ENCODE measurements at regions of chr5 and their contacts with region 1.

Region 1: GRCh38 chr5:135426102-135427082 is 20.8 kb downstream of the DCANP1 start:
- DNase-seq: peak; percentile 61
- ATAC-seq: peak; percentile 93
- H3K4me3 ChIP-seq: no peak overlapping the region
- H3K27ac ChIP-seq: no peak overlapping the region
- H3K4me1 ChIP-seq: no peaks in the 10 kb centered on the region
- H3K27me3 ChIP-seq: no peaks in the 10 kb centered on the region
- CTCF ChIP-seq: peak; percentile 71
- POLR2A ChIP-seq: no peak
- RAD21 ChIP-seq: peak; percentile 74

Region 2: GRCh38 chr5:133483406-133484090 is 1942.8 kb before region 1 on chr5:
- CTCF ChIA-PET with region 1: no interaction called
- POLR2A ChIA-PET with region 1: no interaction called
- dilution Hi-C with region 1: no loop called
- in situ Hi-C with region 1: no loop called
- intact Hi-C with region 1: no loop called
- DNase-seq: no peak
- ATAC-seq: no peak
- H3K4me3 ChIP-seq: no peak overlapping the region
- H3K27ac ChIP-seq: no peak overlapping the region
- H3K4me1 ChIP-seq: no peaks in the 10 kb centered on the region
- H3K27me3 ChIP-seq: peaks cover 13% of the 10 kb centered on the region
- CTCF ChIP-seq: no peak
- POLR2A ChIP-seq: no peak
- RAD21 ChIP-seq: no peak

Region 3: GRCh38 chr5:135345956-135346731 is 80.2 kb before region 1 on chr5:
- CTCF ChIA-PET with region 1: interaction called, 3 read pairs
- POLR2A ChIA-PET with region 1: no interaction called
- dilution Hi-C with region 1: no loop called
- in situ Hi-C with region 1: no loop called
- intact Hi-C with region 1: loop called (anchors 2 kb)
- DNase-seq: no peak
- ATAC-seq: no peak
- H3K4me3 ChIP-seq: no peak overlapping the region
- H3K27ac ChIP-seq: no peak overlapping the region
- H3K4me1 ChIP-seq: peaks cover 16% of the 10 kb centered on the region
- H3K27me3 ChIP-seq: no peaks in the 10 kb centered on the region
- CTCF ChIP-seq: no peak
- POLR2A ChIP-seq: no peak
- RAD21 ChIP-seq: no peak

Region 4: DNA sequence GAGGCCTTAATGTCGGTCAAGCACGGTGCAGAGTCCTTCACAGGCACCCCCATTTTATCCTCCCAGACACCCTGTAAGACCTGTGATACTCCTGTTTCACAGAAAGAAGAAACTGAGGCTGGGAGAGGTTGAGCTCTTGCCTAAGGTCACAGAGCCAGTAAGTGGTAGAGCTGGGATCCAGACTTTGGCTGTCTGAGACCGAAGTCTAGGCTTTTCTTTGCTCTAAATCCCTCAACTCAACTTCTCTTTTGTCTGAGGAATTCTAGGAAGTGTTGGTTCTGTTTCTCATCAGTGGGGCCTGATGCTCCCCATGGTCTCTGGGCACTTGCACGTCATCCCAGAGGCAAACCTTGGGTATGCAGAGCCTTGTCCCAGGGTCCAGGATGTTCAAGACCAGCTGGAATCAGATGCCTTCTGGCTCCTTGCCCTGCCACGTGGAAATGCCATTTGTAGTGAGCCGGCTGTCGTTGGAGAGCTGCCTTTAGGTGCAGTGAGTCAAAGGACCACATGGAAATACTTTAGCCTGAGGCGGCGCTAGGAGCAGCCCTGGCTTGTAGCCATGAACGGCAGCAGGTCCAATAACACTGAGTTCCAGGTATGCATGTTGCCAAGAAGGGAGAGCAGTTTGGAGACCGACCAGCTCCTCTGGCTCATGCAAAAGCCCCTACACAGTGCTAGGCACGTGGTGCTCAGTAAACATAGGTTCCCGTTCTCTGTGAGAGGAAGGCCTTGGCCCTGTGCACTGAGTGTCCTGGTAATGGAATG is 11.6 kb after region 1 on chr5:
- CTCF ChIA-PET with region 1: interaction called, 11 read pairs
- POLR2A ChIA-PET with region 1: no interaction called
- dilution Hi-C with region 1: no loop called
- in situ Hi-C with region 1: no loop called
- intact Hi-C with region 1: no loop called
- DNase-seq: peak; percentile 96
- ATAC-seq: peak; percentile 50
- H3K4me3 ChIP-seq: no peak overlapping the region
- H3K27ac ChIP-seq: peak overlapping the region; percentile 16; the same call in 1 of the 2 replicates
- H3K4me1 ChIP-seq: peaks cover 24% of the 10 kb centered on the region
- H3K27me3 ChIP-seq: no peaks in the 10 kb centered on the region
- CTCF ChIP-seq: 0 out of 2 replicates have a peak, but pooled peaks have one; percentile 6
- POLR2A ChIP-seq: no peak
- RAD21 ChIP-seq: no peak

Measured in IMR-90 (cell line).